Mammary epithelial cell (primary cell): ENCODE measurements at regions of chr10 and their contacts with region 1.

Region 1: DNA sequence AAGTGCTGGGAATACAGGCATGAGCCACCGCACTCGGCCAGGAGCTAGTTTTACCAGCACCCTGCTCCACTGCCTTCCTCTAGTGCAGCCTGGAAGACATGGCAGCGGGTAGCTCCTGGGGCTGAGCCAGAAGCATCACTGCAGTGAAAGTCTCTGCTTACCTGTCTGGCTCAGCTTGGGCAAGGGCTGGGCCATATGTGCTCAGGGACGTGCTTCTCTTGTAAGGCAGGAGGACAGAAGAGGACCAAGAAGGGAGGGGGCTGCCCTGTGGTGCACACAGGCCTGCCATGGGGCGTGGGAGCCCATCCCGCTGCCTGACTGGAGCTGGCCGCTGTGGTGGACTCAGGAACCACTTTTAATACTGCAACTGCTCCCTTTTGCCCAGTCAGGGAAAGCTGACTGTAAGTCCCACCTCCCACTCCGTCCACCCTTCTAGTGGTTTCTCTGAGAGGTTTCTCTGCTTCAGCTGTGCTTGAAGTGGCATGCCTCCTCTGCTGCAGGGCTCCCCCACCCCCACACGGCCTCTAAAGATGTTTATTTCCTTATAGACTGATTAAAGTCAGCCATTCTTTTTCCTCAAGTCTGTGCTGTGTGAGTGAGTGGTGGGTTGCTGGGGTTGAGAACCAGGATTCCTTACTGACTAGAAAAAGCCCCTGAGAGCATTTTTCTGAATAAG is 25.3 kb upstream of the C10orf95 start:
- DNase-seq: no peak
- H3K4me3 ChIP-seq: no peak overlapping the region
- H3K27ac ChIP-seq: no peak overlapping the region
- H3K4me1 ChIP-seq: no peaks in the 10 kb centered on the region
- H3K27me3 ChIP-seq: no peaks in the 10 kb centered on the region
- CTCF ChIP-seq: no peak

Region 2: DNA sequence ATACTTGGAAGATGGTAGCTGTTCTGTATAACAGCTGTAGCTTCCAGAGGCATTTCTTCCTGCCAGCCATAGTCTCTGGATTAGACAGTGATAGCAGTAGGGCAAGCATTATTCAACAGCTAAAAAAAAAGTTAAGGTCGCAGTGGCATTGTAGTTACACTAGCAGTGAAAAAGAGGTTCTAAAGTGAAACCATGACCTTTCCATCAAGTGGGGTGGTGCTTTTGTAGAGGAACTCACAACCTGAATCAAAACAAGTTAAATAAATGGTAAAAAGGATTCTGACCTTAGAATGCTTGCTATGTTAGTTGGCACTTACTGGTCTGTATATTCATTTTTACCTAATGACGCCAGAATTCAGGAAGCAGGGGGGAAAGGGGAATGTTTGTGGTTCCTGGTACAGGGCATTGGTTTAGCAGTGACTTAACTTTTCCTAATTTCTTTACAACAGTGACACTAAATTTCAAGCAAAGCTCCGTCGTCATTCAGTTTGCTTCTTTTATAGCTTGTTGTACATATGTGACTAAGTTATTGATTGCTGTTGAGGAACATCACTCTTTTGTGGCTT is 176.2 kb before region 1 on chr10:
- CTCF ChIA-PET with region 1: no interaction called
- dilution Hi-C with region 1: no loop called
- in situ Hi-C with region 1: no loop called
- intact Hi-C with region 1: no loop called
- DNase-seq: no peak
- H3K4me3 ChIP-seq: no peak overlapping the region
- H3K27ac ChIP-seq: no peak overlapping the region
- H3K4me1 ChIP-seq: peaks cover 8% of the 10 kb centered on the region
- H3K27me3 ChIP-seq: no peaks in the 10 kb centered on the region
- CTCF ChIP-seq: no peak

Region 3: DNA sequence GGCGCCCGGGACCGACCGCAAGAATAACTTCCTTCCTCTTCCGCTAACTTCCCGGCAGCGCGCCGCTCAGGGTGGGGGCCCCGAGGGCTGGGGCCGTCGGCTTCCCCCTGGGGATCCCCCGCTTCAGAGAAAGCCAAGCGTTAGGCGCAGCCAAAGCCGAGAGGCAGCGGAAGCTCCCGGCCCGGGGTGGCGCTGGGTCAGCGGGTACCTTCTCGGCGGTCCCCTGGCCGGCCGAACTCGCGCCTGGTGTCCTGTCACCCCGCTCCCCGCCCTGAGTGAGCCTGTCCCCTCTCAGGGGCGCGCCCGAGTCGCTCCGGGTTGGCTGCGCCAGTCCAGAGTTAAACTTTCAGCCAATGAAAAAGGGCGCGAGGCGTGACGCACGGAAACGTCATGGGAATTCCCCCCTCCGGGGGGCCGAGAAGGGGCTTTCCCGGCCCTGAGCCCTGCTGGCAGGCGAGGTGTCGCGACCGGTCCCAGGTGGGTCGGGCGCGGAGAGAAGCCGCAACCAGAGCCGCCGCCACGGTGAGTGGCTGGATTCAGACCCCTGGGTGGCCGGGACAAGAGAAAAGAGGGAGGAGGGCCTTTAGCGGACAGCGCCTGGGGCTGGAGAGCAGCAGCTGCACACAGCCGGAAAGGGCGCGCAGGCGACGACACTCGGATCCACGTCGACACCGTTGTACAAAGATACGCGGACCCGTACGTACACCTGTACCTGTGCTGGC is 82.4 kb before region 1 on chr10:
- CTCF ChIA-PET with region 1: no interaction called
- dilution Hi-C with region 1: no loop called
- in situ Hi-C with region 1: loop called in 1 of 2 experiments (anchors 5 kb)
- intact Hi-C with region 1: loop called (anchors 1 kb)
- DNase-seq: peak; percentile 98
- H3K4me3 ChIP-seq: peak overlapping the region; percentile 74 to 77 (median 76)
- H3K27ac ChIP-seq: peak overlapping the region; percentile 89
- H3K4me1 ChIP-seq: peaks cover 18% of the 10 kb centered on the region
- H3K27me3 ChIP-seq: no peaks in the 10 kb centered on the region
- CTCF ChIP-seq: no peak

Region 4: DNA sequence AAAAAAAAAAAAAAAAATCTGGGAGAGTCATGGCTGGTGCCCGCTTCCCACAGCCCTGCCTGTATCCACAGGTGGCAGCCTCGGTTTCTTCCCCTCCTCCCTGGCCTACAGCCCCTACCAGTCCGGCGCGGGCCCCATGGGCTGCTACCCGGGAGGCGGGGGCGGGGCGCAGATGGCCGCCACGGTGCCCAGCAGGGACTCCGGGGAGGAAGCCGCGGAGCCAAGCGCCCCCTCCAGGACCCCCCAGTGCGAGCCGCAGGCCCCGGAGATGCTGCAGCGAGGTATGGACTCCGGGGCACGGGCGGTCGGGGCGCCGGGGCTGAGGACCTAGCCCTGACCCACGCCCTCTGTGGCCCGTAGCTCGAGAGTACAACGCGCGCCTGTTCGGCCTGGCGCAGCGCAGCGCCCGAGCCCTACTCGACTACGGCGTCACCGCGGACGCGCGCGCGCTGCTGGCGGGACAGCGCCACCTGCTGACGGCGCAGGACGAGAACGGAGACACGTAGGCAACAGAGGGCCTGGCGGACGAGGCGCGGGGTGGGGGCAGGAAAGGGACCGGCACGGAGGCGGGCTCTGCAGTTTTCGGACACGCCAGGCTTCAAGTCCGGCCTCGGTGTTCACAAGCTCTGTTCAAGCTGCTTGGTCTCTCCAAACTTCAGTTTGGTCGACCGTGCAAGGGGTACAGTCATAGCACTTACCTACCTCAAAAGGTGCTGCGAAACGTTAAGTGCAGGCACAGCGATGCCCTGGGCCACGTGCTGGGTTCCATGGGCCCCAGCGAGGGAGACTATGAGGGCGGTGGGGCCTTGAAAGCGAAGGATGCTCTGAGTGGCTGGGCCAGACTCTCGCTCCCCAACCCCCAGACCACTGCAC is 77.2 kb before region 1 on chr10:
- CTCF ChIA-PET with region 1: no interaction called
- dilution Hi-C with region 1: no loop called
- in situ Hi-C with region 1: loop called in 1 of 2 experiments (anchors 5 kb)
- intact Hi-C with region 1: loop called (anchors 1 kb)
- DNase-seq: peak; percentile 78
- H3K4me3 ChIP-seq: peak overlapping the region in 2 of 3 experiments; percentile 38 to 50
- H3K27ac ChIP-seq: no peak overlapping the region
- H3K4me1 ChIP-seq: peaks cover 38% of the 10 kb centered on the region
- H3K27me3 ChIP-seq: no peaks in the 10 kb centered on the region
- CTCF ChIP-seq: peak; percentile 73 to 94

Region 5: DNA sequence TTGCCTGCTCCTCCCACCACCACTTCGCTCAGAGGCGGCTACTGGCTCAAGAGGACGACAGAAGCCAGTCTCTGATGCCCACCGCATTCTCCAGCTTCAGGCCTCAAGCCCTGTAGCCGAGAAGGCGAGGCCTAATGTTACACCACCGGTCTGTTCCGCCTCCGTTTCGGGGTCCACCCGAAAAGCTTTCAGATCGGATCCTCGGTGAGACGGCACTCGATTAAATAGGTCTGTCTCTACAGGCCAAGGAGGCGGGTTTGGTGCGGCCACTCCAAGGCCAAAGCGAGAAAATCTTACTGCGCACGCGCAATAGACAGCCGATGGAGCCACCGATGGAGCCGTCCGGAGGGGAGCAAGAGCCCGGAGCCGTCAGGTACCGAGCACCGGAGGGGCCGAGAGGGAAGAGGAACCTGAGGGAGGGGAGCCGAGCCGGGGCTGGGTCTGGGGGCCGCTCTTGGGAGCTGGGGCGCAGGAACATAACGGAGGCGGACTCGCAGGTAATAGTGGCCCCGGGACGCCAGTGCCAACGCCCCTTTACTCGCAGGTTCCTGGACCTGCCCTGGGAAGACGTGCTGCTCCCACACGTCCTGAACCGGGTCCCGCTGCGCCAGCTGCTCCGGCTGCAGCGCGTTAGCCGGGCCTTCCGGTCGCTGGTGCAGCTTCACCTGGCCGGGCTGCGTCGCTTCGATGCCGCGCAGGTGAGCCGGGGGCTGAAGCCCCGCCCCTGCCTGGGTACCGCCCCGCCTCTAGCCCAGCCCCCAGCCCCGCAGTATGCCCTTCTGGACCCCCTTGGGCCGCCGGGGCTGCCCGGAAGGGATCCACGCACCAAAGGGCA is 55.6 kb before region 1 on chr10 and contains the start of gene FBXL15:
- CTCF ChIA-PET with region 1: no interaction called
- dilution Hi-C with region 1: no loop called
- in situ Hi-C with region 1: no loop called
- intact Hi-C with region 1: loop called (anchors 1 kb)
- DNase-seq: peak; percentile 96
- H3K4me3 ChIP-seq: peak within 1 kb of the TSS; percentile 72 to 88 (median 74)
- H3K27ac ChIP-seq: peak within 1 kb of the TSS; percentile 56
- H3K4me1 ChIP-seq: peaks cover 38% of the 10 kb centered on the region
- H3K27me3 ChIP-seq: no peaks in the 10 kb centered on the region
- CTCF ChIP-seq: no peak
- total RNA-seq, gene FBXL15: 5.0 to 7.0 TPM

Region 6: DNA sequence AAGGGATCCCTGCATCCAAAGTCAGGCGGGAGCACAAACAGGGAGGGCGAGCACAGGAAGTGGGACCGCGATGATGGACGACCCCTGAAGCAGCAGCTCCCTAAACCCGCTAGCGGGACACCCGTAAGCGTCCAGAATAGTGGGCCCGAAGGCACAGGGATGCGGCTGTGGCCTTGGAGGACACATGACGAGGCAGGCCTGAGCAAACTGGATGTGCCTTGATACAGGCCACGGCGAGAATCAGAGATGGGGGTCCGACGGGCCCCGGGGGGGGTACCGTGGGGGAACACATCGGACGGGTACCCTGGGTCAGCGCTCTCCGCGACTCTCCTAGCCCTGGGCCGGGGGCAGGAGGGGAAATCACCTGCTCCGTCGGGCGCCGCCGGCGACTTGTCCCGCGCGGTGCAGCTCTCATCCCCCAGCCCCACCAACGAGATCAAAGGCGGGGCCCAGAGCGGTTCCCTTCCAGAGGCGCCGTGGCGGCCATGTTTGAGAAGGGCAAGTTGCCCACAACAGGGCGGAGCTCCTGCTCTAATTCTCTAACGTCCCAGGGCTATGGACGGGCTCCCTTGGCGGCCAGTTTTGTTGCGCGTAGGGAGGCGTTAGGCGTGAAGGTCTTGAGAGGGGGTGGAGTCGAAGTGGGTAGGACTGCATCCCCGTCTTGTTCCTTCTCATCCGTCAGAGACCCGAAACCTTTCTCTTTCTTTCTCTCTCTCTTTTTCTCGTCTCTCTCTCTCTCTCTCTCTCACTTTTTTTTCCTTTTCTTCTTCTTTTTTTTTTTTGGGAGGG is 44.2 kb before region 1 on chr10 and contains the start of gene CUEDC2:
- CTCF ChIA-PET with region 1: no interaction called
- dilution Hi-C with region 1: loop called (anchors 5 kb)
- in situ Hi-C with region 1: no loop called
- intact Hi-C with region 1: loop called (anchors 2 kb)
- DNase-seq: peak; percentile 94
- H3K4me3 ChIP-seq: peak within 1 kb of the TSS; percentile 42 to 97 (median 80)
- H3K27ac ChIP-seq: peak within 1 kb of the TSS; percentile 47
- H3K4me1 ChIP-seq: no peaks in the 10 kb centered on the region
- H3K27me3 ChIP-seq: no peaks in the 10 kb centered on the region
- CTCF ChIP-seq: no peak
- total RNA-seq, gene CUEDC2: 32.0 to 49.5 TPM

Region 7: GRCh38 chr10:102461187-102462054 is 15.2 kb before region 1 on chr10:
- CTCF ChIA-PET with region 1: no interaction called
- dilution Hi-C with region 1: no loop called
- in situ Hi-C with region 1: no loop called
- intact Hi-C with region 1: loop called (anchors 2 kb)
- DNase-seq: peak; percentile 88
- H3K4me3 ChIP-seq: peak overlapping the region; percentile 43 to 56 (median 54)
- H3K27ac ChIP-seq: peak overlapping the region; percentile 9
- H3K4me1 ChIP-seq: peaks cover 11% of the 10 kb centered on the region
- H3K27me3 ChIP-seq: no peaks in the 10 kb centered on the region
- CTCF ChIP-seq: no peak

Region 8: DNA sequence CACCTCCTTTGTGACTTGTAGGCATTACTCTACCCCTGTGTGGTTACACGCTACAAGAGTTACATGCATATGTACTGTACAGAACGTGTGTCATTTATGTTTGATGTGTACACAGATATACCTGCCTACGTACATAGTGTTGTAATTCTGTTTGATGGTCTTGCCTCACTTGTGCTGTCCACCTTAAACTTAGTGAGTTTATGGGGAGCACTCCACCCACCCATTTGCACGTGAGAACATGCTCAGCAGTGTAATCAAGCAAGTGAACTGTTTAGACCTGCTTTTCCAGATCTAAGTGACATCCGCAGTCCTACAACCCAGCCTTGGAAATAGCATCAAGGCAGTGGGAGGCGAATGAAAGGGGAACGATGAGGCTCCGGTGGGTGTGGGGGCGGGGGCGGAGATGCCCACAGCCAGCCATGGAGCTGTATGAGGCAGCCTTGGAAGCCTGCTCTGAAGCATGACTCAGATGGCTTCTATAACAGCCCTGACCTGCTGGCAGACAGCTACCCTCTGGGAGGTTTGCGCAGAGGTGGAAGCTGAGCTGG is 79.3 kb after region 1 on chr10:
- CTCF ChIA-PET with region 1: no interaction called
- dilution Hi-C with region 1: no loop called
- in situ Hi-C with region 1: no loop called
- intact Hi-C with region 1: no loop called
- DNase-seq: peak; percentile 68
- H3K4me3 ChIP-seq: no peak overlapping the region
- H3K27ac ChIP-seq: no peak overlapping the region
- H3K4me1 ChIP-seq: peaks cover 13% of the 10 kb centered on the region
- H3K27me3 ChIP-seq: no peaks in the 10 kb centered on the region
- CTCF ChIP-seq: no peak

Region 9: DNA sequence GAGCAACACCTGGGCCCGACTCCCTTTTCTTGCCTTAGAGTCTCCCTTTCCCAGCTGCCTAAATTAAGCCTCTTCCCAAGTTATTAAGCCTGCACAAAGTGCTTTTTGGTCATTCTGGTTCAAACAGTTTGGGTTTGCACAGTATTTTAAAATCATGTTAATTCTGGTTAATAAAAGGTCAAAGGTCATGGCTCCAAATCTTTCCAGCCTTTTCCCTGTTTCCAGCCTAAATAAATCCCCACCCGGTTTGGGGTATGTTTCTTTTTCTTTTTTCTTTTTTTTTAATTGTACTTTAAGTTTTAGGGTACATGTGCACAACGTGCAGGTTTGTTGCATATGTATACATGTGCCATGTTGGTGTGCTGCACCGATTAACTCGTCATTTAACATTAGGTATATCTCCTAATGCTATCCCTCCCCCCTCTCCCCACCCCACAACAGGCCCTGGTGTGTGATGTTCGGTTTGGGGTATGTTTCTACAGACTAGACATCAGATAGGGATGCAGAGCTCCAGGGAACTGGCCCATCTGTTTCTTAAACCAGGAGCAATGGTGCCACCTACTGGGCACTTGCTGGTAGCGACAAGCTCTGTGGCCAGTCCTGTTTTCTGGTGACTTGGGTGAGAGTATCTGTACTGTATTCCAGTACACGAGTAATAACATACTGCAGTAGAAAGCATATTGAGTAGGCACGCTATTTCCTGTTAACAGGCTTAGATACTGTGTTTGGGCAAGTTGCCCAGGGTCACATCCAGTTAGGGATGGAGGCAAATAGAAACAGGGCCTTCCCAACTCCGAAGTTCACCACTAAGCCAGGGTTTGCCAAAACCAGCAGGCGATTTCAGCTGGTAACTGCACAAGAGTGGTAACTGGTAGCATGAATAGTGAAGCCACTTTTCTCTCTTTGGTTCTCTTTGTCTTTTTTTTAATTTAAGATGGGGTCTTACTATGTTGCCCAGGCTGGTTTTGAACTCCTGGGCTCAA is 107.1 kb after region 1 on chr10:
- CTCF ChIA-PET with region 1: no interaction called
- dilution Hi-C with region 1: no loop called
- in situ Hi-C with region 1: no loop called
- intact Hi-C with region 1: loop called (anchors 1 kb)
- DNase-seq: peak; percentile 66
- H3K4me3 ChIP-seq: no peak overlapping the region
- H3K27ac ChIP-seq: no peak overlapping the region
- H3K4me1 ChIP-seq: no peaks in the 10 kb centered on the region
- H3K27me3 ChIP-seq: no peaks in the 10 kb centered on the region
- CTCF ChIP-seq: peak; percentile 89 to 91

Region 10: DNA sequence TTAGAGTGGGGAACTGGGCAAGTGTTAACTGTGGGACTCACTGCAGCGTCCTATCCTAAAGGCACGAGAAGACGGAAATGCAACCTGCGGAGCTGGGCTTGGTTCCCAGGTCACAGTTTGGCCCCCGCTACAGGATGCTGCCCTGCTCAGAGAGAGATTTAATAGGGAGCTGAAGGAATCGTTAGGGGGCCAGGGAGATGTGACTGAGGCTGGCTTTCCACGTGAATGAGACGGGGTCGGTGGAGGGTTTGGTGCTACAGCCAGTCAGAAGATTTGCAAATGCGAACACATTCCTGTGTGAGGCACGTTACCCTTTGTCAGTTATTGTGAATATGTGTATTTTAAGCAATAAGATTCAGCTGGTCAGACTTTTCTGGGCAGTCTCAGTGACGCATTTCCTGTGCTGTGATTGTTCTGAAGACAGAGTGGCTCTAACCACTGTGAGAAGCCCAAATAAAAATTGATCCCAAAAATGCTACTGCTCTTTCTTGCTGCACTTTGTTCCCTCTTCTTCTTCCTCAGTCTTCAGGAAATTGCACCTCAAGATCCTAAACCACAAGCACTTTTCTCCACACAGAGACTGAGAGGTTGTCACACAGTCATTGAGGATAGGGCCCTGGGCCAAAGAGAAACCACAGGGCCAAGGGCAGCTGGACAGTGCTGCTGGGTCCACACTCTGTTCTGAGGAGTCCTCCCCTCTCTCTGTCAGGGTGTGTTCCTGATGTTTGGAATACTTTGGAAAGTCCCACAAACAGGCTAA is 339.4 kb after region 1 on chr10:
- CTCF ChIA-PET with region 1: no interaction called
- dilution Hi-C with region 1: no loop called
- in situ Hi-C with region 1: no loop called
- intact Hi-C with region 1: no loop called
- DNase-seq: no peak
- H3K4me3 ChIP-seq: no peak overlapping the region
- H3K27ac ChIP-seq: no peak overlapping the region
- H3K4me1 ChIP-seq: no peaks in the 10 kb centered on the region
- H3K27me3 ChIP-seq: no peaks in the 10 kb centered on the region
- CTCF ChIP-seq: no peak